ENCODE measurements at regions of chr6 and their contacts with region 1.

Region 1: GRCh38 chr6:30730601-30731435 is 10.7 kb downstream of the TUBB start:
- H3K4me3 ChIP-seq: no peak overlapping the region
- H3K27ac ChIP-seq: no peak overlapping the region
- H3K4me1 ChIP-seq: peaks cover 4% of the 10 kb centered on the region
- CTCF ChIP-seq: peak; percentile 91

Region 2: DNA sequence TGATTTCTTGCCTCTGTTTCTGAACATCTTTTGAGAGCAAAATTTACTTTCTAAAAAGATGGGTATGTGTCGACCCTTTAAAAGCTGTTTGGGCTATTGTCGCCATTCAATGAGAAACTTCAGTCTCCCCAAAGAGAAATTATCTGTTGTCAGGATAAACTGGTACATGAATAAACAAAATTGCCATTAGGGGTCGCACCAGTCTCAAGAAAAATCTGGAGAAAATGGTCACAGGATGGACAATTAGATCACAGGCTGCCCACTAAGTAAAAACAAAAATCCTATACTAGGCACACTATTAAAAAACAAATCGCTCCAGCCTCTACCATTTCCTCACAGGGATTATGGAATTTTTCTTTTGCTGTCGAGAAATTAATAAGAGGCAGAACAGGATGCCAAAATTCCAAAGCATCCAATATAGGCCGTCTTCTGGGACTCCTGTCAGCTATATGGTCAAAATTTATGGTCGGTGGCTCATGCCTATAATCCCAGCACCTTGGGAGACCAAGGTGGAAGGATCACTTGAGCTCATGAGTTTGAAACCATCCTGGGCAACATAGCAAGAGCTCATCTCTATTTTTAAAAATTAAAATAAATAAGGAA is 247.0 kb before region 1 on chr6:
- CTCF ChIA-PET with region 1: interaction called, 24 read pairs
- POLR2A ChIA-PET with region 1: interaction called, 3 read pairs
- H3K4me3 ChIP-seq: no peak overlapping the region
- H3K27ac ChIP-seq: no peak overlapping the region
- H3K4me1 ChIP-seq: no peaks in the 10 kb centered on the region
- CTCF ChIP-seq: peak; percentile 33; the same call in 1 of the 2 replicates

Region 3: DNA sequence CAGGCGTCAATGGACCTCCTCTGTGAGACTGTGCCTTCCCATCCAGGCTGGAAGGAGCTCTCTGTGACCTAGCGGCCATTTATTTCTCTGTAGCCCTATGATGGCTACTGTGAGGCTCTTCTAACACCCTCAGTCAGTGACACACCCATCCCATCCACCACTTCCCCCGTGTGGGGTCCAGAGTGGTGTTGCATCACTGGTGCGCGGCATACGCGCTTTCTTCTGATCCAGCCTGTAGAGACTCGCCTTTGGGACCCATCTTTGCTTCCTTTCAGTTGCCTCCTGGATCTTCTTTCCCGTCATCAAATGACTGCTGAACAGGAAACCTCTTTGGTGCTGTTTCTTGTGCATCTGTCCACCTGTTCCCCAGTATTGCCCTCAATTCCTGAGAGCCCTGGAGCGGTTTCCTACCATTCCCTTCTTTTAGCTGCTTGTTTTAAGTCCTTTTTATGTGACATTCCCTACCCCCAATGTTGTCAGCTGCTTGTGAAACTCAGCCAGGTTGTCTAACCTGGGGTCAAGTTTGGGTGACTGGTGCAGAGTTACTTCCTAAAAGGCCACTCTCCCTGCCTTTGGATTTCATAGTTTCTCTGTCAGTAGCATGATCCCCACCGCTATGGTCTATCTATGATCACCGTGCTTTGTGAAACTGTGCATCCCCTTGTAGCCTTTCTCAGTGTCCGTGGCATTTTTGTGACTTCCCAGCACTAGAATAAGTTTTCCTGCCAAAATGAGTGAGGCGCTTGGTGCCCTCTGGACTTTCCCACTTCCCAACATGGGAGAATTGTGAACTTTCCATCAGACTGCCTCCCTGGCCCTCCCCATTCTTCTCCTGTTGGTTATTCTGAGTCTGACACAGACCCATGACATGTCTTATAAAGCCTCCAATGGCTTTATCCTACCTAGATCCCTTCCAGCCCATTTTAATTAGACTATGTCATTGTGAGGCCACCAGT is 168.1 kb before region 1 on chr6:
- CTCF ChIA-PET with region 1: no interaction called
- POLR2A ChIA-PET with region 1: no interaction called
- H3K4me3 ChIP-seq: no peak overlapping the region
- H3K27ac ChIP-seq: no peak overlapping the region
- H3K4me1 ChIP-seq: 0 out of 2 replicates have a peak, but pooled peaks cover 3% of the 10 kb centered on the region
- CTCF ChIP-seq: no peak

Region 4: GRCh38 chr6:30611150-30611855 is 119.5 kb before region 1 on chr6:
- CTCF ChIA-PET with region 1: interaction called, 17 read pairs
- POLR2A ChIA-PET with region 1: interaction called, 35 read pairs
- H3K4me3 ChIP-seq: no peak overlapping the region
- H3K27ac ChIP-seq: peak overlapping the region; percentile 10; the same call in 1 of the 2 replicates
- H3K4me1 ChIP-seq: peaks cover 18% of the 10 kb centered on the region
- CTCF ChIP-seq: no peak

Region 5: GRCh38 chr6:30672445-30673253 is 58.2 kb before region 1 on chr6 and contains the start of gene DHX16:
- CTCF ChIA-PET with region 1: interaction called, 692 read pairs
- POLR2A ChIA-PET with region 1: interaction called, 61 read pairs
- H3K4me3 ChIP-seq: peak within 1 kb of the TSS; percentile 60
- H3K27ac ChIP-seq: peak within 1 kb of the TSS; percentile 54; the same call in 1 of the 2 replicates
- H3K4me1 ChIP-seq: 0 out of 2 replicates have a peak, but pooled peaks cover 3% of the 10 kb centered on the region
- CTCF ChIP-seq: peak; percentile 81; the same call in 1 of the 2 replicates

Region 6: DNA sequence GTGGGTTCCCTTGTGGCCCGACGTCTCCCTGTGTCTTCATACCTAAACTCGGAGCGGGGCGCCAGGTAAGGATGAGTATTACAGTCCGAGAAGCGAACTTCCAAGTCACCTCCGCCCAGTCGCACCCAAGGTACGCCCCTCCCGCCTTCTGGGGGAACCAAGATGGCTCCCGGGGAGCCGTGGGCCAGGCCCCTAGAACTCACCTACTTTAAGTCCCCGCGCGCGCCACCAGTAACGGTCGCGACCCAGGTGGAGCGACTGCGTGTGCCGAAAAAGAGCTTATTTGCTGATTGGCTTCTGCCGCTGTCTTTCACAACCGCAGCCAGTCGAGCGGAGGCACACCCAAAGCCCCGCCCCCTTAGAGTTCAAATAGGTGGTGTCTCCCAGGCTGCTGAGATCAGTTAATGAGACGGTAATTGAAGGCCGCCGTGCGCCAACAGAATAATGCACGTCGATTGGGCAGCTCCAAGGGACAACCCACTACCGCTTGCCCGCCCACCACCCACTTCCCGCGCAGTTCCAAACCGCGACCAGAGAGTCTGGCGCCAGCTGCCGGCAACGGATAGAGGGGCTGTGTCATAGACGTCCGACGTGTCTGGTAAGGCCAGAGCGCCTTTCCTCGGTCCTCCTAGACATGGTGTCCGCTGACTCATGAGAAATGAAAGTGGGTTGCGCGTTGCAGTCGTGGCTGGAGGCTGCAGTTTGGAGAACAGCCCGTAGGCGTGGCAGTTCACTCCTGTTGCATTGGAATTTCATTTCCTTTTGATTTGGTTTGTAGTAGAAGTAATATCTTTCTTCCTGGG is 13.6 kb before region 1 on chr6 and contains the start of gene MDC1:
- CTCF ChIA-PET with region 1: interaction called, 62 read pairs
- POLR2A ChIA-PET with region 1: interaction called, 11 read pairs
- H3K4me3 ChIP-seq: peak within 1 kb of the TSS; percentile 72
- H3K27ac ChIP-seq: peak within 1 kb of the TSS; percentile 88
- H3K4me1 ChIP-seq: peaks cover 6% of the 10 kb centered on the region
- CTCF ChIP-seq: peak; percentile 86

Region 7: DNA sequence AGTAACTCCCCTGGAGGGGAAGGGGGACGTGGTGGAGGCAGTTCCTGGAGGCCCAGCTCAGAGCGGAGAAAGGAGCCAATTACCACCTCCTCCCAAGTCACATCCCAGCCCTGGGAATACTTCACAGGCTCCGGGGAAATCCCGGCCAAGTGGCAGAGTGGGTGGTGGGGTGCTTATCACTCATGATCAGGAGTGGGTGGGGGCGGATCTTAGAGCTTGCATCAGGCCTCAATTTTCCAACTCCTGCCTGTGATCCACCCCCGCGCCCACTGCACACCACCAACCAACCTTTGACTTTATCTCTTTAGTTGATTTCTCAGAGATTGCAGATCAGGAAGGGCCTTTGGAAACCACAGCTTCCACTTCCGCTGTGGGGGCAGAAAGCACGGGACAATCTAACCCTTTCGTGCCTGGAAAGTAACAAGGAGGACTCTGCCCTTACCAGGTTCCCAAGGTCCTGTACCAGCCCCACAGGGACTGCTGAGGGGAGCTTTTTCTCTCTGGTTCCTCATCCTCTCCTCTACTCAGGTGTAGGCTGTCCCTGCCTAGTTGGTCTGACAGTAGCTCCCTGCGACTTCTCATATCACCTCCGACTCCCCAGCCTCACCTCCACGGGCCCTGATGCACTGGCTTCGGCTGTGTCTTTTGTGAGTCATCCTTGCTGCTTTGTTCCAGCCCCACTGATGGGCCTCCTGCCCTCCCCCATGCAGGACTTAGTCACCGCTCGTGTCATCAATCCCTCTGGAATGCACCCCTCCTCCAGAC is 38.5 kb after region 1 on chr6:
- CTCF ChIA-PET with region 1: interaction called, 8 read pairs
- POLR2A ChIA-PET with region 1: interaction called, 11 read pairs
- H3K4me3 ChIP-seq: peak overlapping the region; percentile 19
- H3K27ac ChIP-seq: peak overlapping the region; percentile 72; the same call in 1 of the 2 replicates
- H3K4me1 ChIP-seq: peaks cover 18% of the 10 kb centered on the region
- CTCF ChIP-seq: no peak

Region 8: DNA sequence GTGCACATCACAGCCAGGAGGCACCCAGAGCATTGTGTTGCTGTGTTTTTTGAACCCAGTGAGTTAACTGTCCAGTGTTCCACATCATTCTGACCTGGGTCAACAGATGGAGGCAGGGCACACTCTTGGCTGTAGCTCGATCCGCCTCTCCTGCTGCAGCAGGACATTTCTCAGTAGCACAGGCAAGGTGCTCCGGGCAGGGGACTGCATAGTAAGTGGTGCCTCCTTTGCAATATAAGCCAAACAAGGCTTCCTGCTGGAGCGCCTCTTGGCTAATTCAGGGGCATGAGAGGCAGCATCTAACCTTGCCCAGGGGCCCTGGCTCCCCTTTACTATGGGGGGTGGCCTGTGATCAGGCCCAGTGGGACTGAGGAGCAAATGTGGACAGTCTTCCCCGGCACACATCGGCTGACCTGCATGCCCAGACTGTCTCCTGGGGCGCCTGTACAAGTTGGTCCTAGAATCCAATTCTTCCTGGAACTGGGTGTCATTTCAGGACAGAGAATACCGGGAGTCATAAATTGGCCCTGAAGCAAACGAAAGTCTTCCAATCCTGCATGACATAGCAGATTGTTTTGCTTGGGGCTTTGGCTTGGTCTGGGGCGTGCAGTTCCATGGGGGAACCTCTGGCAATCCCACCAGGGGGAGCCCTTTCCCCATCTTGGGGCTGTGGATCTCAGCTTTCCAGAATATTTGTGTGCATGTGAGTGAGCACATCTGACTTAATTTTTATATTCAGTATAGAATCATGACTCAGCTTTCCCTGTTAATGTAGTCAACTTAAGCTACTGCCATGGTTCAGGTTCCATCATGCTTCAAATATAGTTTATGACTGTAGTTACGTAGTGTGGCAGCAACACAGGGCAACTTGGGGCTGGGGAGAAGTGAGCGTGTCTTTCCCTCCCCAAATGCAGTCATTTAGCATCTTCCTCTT is 97.5 kb after region 1 on chr6:
- CTCF ChIA-PET with region 1: interaction called, 12 read pairs
- POLR2A ChIA-PET with region 1: no interaction called
- H3K4me3 ChIP-seq: no peak overlapping the region
- H3K27ac ChIP-seq: no peak overlapping the region
- H3K4me1 ChIP-seq: no peaks in the 10 kb centered on the region
- CTCF ChIP-seq: peak; percentile 79

Region 9: GRCh38 chr6:30951907-30952469 is 221.2 kb after region 1 on chr6:
- CTCF ChIA-PET with region 1: no interaction called
- POLR2A ChIA-PET with region 1: no interaction called
- H3K4me3 ChIP-seq: no peak overlapping the region
- H3K27ac ChIP-seq: no peak overlapping the region
- H3K4me1 ChIP-seq: no peaks in the 10 kb centered on the region
- CTCF ChIP-seq: no peak

Region 10: DNA sequence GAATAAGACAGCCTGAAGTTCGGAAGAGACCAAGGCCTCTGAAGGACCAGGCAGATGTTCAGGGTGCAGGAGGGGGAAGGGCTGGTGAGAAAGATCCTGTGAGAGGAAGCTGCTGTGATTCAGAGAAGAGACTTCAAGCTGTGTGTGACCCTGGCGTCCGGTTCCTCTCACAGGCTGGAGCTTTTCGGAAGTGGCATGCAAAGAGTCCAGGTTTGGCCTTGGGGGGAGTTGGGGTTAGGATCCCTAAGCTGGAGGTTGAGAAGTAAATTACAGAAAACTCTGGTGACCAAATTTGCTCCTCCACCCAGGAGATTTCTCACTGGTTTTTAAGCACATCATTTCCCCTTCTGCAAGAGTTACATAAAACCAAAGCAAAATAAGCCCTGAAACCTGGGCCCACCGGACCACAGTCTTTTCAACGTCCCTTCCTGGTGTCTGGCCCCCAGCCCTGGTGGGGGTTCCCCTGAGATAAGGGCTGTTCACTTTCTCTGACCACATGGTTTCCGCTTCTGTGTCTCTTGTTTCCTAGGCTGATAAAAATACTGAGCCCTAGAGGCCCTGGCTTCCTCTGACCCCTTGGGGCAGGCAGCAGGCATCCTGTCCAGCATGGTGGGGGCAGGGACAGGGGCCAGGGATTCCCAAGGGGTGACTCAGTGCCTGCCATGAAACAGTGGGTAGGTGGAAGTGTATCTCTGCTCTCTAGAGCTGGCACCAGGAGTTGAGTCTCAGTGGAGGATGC is 829.3 kb after region 1 on chr6:
- CTCF ChIA-PET with region 1: no interaction called
- POLR2A ChIA-PET with region 1: no interaction called
- H3K4me3 ChIP-seq: no peak overlapping the region
- H3K27ac ChIP-seq: no peak overlapping the region
- H3K4me1 ChIP-seq: no peaks in the 10 kb centered on the region
- CTCF ChIP-seq: no peak

Region 11: GRCh38 chr6:31971993-31972708 is 1241.3 kb after region 1 on chr6 and contains the start of gene DXO:
- CTCF ChIA-PET with region 1: no interaction called
- POLR2A ChIA-PET with region 1: no interaction called
- H3K4me3 ChIP-seq: peak within 1 kb of the TSS; percentile 83
- H3K27ac ChIP-seq: peak within 1 kb of the TSS; percentile 74
- H3K4me1 ChIP-seq: peaks cover 5% of the 10 kb centered on the region
- CTCF ChIP-seq: no peak